PC-3 (cell line): ENCODE measurements at regions of chr5 and their contacts with region 1.

Region 1: GRCh38 chr5:148998174-148998797 is 64.6 kb downstream of the SH3TC2 start:
- DNase-seq: peak; percentile 99
- ATAC-seq: peak; percentile 27
- H3K4me3 ChIP-seq: no peak overlapping the region
- H3K27ac ChIP-seq: no peak overlapping the region
- H3K4me1 ChIP-seq: peaks cover 73% of the 10 kb centered on the region
- H3K27me3 ChIP-seq: no peaks in the 10 kb centered on the region
- CTCF ChIP-seq: peak; percentile 99

Region 2: DNA sequence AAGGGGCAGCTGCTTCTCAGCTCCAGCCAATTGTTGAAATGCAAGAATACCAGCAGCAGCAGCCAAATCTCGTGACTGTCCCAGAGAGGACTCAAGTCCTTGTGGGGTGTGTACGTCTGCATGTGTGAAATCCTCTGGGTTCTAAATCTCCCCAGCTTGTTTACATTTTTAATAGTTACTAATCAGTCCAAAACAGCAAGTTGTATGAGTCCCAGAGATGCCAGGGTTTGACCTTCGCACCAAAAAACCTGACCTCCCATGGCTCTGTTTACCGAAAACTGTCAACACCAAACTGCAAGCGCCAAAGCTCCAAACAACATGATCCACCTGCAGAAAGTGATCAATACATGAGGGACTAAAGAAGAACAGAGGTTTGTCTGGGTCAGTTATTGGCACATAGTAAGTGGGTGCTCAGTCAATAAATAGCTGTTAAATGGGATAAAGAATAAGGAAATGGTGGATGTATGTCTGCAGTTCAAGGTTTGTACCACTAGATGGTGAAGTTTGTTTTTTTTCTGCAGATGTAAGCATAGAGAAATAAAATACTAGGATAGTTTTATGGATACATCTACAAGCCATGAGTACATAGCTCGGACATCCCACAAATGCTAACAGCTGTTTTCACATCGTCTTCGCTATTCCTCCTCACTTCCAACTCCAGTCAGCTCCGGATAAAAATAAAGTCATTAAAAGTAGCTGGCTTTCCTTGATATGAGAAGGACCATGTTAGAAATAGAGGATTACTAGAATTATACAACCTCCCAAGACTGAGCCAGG is 257.1 kb before region 1 on chr5:
- CTCF ChIA-PET with region 1: interaction called, 14 read pairs
- POLR2A ChIA-PET with region 1: interaction called, 4 read pairs
- intact Hi-C with region 1: loop called (anchors 1 kb)
- DNase-seq: peak; percentile 96
- ATAC-seq: peak; percentile 92
- H3K4me3 ChIP-seq: peak overlapping the region; percentile 4; the same call in 1 of the 2 replicates
- H3K27ac ChIP-seq: no peak overlapping the region
- H3K4me1 ChIP-seq: peaks cover 5% of the 10 kb centered on the region
- H3K27me3 ChIP-seq: no peaks in the 10 kb centered on the region
- CTCF ChIP-seq: peak; percentile 99

Region 3: GRCh38 chr5:148836272-148837250 is 161.7 kb before region 1 on chr5:
- CTCF ChIA-PET with region 1: no interaction called
- POLR2A ChIA-PET with region 1: no interaction called
- intact Hi-C with region 1: no loop called
- DNase-seq: peak; percentile 52
- ATAC-seq: peak; percentile 76
- H3K4me3 ChIP-seq: no peak overlapping the region
- H3K27ac ChIP-seq: no peak overlapping the region
- H3K4me1 ChIP-seq: peaks cover 48% of the 10 kb centered on the region
- H3K27me3 ChIP-seq: no peaks in the 10 kb centered on the region
- CTCF ChIP-seq: no peak

Region 4: GRCh38 chr5:148912714-148913398 is 85.4 kb before region 1 on chr5:
- CTCF ChIA-PET with region 1: interaction called, 7 read pairs
- POLR2A ChIA-PET with region 1: interaction called, 4 read pairs
- intact Hi-C with region 1: loop called (anchors 1 kb)
- DNase-seq: peak; percentile 100
- ATAC-seq: peak; percentile 62
- H3K4me3 ChIP-seq: peak overlapping the region; percentile 19; the same call in 1 of the 2 replicates
- H3K27ac ChIP-seq: peak overlapping the region; percentile 88
- H3K4me1 ChIP-seq: peaks cover 80% of the 10 kb centered on the region
- H3K27me3 ChIP-seq: no peaks in the 10 kb centered on the region
- CTCF ChIP-seq: peak; percentile 97

Region 5: DNA sequence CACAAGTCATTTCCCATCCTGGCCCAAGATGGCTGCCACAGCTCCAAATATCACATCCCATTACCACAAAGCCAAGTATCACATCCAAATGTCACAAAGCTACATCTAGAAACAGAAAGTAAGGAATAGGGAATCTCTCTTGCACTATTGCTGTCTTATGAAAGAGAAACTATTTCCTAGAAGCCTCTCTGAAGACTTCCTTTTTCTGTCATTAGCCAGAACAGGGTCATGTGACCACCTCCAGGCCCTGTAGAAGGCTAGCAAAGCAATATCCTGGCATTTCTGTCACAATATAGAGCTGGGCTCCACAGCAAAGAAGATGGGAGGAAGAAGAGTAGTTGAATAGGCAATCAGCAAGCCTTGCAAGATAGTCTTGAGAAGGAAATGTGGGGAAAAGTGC is 34.6 kb before region 1 on chr5:
- CTCF ChIA-PET with region 1: interaction called, 15 read pairs
- POLR2A ChIA-PET with region 1: interaction called, 7 read pairs
- intact Hi-C with region 1: loop called (anchors 1 kb)
- DNase-seq: no peak
- ATAC-seq: no peak
- H3K4me3 ChIP-seq: no peak overlapping the region
- H3K27ac ChIP-seq: peak overlapping the region; percentile 79; the same call in 1 of the 2 replicates
- H3K4me1 ChIP-seq: peaks cover 81% of the 10 kb centered on the region
- H3K27me3 ChIP-seq: no peaks in the 10 kb centered on the region
- CTCF ChIP-seq: no peak

Region 6: GRCh38 chr5:149035372-149035790 is 37.1 kb after region 1 on chr5:
- CTCF ChIA-PET with region 1: interaction called, 17 read pairs
- POLR2A ChIA-PET with region 1: no interaction called
- intact Hi-C with region 1: loop called (anchors 1 kb)
- DNase-seq: peak; percentile 98
- ATAC-seq: peak; percentile 92
- H3K4me3 ChIP-seq: no peak overlapping the region
- H3K27ac ChIP-seq: no peak overlapping the region
- H3K4me1 ChIP-seq: peaks cover 42% of the 10 kb centered on the region
- H3K27me3 ChIP-seq: no peaks in the 10 kb centered on the region
- CTCF ChIP-seq: peak; percentile 100

Region 7: DNA sequence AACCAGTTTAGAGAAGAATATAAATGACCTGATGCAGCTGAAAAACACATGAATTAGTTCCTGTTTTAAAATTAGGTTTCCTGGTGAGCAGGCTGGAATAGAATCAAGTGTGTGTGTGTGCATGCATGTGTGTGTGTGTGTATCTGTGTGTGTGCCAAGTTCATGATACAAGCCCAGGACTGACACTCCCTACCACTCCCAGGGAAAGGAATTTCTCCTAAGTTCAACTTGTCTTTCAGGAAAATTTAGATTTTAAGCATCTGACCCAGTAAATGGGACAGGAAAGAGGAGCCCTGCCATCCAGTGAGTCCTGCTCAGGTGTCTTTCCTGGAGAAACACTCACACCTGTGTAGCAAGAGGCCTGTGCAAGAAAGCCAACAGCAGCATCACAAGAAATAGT is 75.8 kb after region 1 on chr5:
- CTCF ChIA-PET with region 1: no interaction called
- POLR2A ChIA-PET with region 1: interaction called, 7 read pairs
- intact Hi-C with region 1: loop called (anchors 2 kb)
- DNase-seq: peak; percentile 98
- ATAC-seq: peak; percentile 44
- H3K4me3 ChIP-seq: no peak overlapping the region
- H3K27ac ChIP-seq: peak overlapping the region; percentile 82
- H3K4me1 ChIP-seq: peaks cover 53% of the 10 kb centered on the region
- H3K27me3 ChIP-seq: no peaks in the 10 kb centered on the region
- CTCF ChIP-seq: no peak

Region 8: DNA sequence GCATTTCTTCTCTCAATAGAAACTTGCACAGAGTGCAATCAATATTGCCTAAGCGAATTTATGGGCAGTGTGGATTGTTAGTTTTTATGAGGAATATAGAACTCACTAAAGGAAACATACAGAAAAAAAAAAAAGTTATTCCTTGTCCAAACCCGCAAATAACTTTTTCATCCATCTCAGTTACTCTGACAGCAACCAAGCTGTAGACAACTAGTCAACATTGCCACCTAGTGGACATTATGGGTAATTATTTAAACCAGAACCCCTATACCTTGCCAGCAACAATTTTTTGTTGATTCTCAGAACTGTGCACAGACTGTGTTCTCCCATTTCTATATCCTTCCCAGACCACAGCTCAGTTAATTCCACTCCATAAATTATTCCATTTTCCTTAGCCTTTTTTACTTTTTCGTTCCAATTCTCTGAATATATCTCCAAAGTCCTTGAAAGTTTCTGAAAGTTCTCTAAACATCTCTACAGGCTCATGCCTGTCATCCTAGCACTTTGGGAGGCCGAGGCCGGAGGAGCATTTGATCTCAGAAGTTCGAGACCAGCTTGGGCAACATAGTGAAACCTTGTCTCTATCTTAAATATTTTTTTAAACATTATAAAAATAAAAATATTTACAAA is 270.8 kb after region 1 on chr5:
- CTCF ChIA-PET with region 1: no interaction called
- POLR2A ChIA-PET with region 1: interaction called, 3 read pairs
- intact Hi-C with region 1: loop called (anchors 5 kb)
- DNase-seq: peak; percentile 96
- ATAC-seq: 0 out of 2 replicates have a peak, but pooled peaks have one; percentile 3
- H3K4me3 ChIP-seq: no peak overlapping the region
- H3K27ac ChIP-seq: no peak overlapping the region
- H3K4me1 ChIP-seq: peaks cover 28% of the 10 kb centered on the region
- H3K27me3 ChIP-seq: no peaks in the 10 kb centered on the region
- CTCF ChIP-seq: peak; percentile 99